Activated CD4-positive, alpha-beta T cell treated with anti-CD3 and anti-CD28 coated beads for 36 hours (primary cell): ENCODE measurements at regions of chr5 and their contacts with region 1.

Region 1: DNA sequence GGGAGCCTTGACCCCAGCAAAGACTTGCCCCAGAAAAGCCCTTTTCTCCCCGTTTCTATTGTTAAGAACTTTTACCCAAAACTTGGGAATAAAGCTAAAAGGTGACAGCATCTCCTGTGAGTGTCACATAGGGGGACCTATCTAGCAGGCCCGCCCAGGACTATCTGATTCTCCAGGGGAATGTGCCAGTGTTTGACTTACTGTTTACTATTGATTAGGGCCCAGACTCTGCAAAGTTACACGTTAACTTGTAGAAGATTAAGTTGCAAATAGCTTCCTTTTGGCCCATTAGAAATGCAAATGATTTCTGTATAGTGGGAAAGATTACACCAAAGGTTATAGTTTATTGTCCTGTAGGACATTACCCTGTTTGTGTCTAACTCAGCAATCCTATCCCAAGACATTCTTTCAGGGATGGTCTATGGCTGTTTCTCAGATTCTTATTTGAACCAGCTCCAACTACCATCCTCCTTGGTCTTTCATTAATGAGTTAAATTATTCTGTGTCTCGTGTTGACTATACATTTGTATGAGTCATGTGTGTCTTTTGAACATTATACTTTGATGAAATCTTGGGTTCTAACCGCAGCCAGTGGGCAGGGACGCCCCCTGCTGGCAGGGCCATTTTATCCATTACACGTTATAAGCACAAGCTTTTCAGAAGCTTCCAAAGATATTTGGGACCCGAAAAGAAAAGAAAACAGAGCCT is 60.7 kb downstream of the HRH2 start:
- DNase-seq: peak; percentile 88
- ATAC-seq: peak; percentile 91
- H3K4me3 Mint-ChIP-seq: no peak overlapping the region
- H3K27ac Mint-ChIP-seq: no peak overlapping the region
- H3K4me1 Mint-ChIP-seq: peaks cover 6% of the 10 kb centered on the region
- H3K27me3 Mint-ChIP-seq: no peaks in the 10 kb centered on the region

Region 2: DNA sequence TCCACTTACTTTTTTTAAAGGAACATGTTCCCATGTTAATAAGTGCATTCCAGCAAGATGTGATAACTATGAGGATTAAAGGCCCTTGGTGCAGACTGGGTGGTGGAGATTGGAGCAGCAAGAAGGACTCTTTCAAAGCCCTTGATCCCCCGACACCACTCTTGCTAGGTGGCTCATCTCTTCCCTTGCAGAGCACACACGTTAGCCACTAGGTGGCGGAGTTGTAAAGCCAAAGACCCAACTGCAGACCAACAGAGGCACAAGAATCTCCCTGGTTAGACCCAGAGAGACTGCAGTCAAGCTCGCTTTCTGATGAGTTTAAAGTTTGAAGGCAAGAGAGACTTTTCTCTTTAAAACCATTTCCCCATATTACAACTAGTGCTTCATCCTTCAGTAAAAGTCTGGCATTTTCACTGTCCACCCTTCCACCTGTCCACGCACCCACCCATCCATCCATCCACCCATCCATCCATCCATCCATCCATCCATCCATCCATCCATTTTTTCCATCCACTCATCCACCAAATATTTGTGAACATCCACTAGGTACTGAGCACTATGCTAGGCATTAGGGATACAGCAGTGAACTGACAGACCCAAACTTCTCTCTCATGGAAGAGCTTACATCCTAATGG is 767.3 kb before region 1 on chr5:
- CTCF ChIA-PET with region 1: no interaction called
- POLR2A ChIA-PET with region 1: no interaction called
- intact Hi-C with region 1: loop called in 1 of 2 experiments (anchors 2 kb)
- DNase-seq: peak; percentile 74
- ATAC-seq: peak; percentile 74
- H3K4me3 Mint-ChIP-seq: no peak overlapping the region
- H3K27ac Mint-ChIP-seq: no peak overlapping the region
- H3K4me1 Mint-ChIP-seq: no peaks in the 10 kb centered on the region
- H3K27me3 Mint-ChIP-seq: peaks cover 10% of the 10 kb centered on the region

Region 3: DNA sequence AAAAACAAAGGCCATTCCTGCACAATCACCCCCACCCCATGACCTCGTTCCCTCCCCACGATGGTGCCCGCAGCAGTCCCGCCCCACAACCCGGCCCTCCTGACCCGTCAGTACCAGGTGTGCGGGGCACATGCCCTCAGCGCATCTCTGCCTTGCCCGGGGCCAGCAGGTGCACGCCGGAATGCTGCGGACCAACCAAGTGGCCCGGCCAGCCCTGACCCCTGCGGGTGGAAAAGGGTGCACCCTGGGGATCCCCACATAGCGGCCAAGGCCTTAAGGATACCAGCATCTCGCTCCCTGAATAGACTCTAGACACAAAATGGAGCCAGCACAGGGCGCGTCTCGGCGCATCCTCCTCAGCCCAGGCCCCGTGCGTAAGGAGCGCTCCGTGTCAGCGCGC is 234.2 kb before region 1 on chr5:
- CTCF ChIA-PET with region 1: no interaction called
- POLR2A ChIA-PET with region 1: no interaction called
- intact Hi-C with region 1: no loop called
- DNase-seq: no peak
- ATAC-seq: no peak
- H3K4me3 Mint-ChIP-seq: no peak overlapping the region
- H3K27ac Mint-ChIP-seq: no peak overlapping the region
- H3K4me1 Mint-ChIP-seq: peaks cover 89% of the 10 kb centered on the region
- H3K27me3 Mint-ChIP-seq: no peaks in the 10 kb centered on the region

Region 4: GRCh38 chr5:175526691-175527090 is 191.9 kb before region 1 on chr5:
- CTCF ChIA-PET with region 1: interaction called, 22 read pairs
- POLR2A ChIA-PET with region 1: no interaction called
- intact Hi-C with region 1: no loop called
- DNase-seq: no peak
- ATAC-seq: no peak
- H3K4me3 Mint-ChIP-seq: no peak overlapping the region
- H3K27ac Mint-ChIP-seq: peak overlapping the region; percentile 79
- H3K4me1 Mint-ChIP-seq: peaks cover 66% of the 10 kb centered on the region
- H3K27me3 Mint-ChIP-seq: no peaks in the 10 kb centered on the region

Region 5: DNA sequence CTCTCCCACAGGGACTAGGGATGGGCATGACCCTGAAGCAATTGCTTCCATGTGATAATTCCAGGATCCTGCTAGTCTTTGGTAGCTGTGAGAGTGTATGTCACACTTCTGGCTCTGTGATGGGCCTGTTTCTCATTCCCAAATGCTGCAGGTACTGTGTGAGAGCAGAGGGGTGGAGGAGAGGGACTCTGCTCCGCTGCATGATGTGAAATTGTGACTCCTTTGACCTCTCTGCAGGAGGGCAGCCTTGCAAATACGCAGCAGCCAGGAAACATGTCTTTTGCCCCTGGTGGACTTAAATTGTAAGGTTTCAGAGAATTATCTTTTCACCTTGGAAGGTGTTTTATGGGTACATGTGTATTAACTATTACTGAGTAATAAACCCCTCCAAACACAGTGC is 178.6 kb before region 1 on chr5:
- CTCF ChIA-PET with region 1: interaction called, 70 read pairs
- POLR2A ChIA-PET with region 1: no interaction called
- intact Hi-C with region 1: loop called (anchors 2 kb)
- DNase-seq: no peak
- ATAC-seq: no peak
- H3K4me3 Mint-ChIP-seq: no peak overlapping the region
- H3K27ac Mint-ChIP-seq: no peak overlapping the region
- H3K4me1 Mint-ChIP-seq: peaks cover 24% of the 10 kb centered on the region
- H3K27me3 Mint-ChIP-seq: no peaks in the 10 kb centered on the region

Region 6: DNA sequence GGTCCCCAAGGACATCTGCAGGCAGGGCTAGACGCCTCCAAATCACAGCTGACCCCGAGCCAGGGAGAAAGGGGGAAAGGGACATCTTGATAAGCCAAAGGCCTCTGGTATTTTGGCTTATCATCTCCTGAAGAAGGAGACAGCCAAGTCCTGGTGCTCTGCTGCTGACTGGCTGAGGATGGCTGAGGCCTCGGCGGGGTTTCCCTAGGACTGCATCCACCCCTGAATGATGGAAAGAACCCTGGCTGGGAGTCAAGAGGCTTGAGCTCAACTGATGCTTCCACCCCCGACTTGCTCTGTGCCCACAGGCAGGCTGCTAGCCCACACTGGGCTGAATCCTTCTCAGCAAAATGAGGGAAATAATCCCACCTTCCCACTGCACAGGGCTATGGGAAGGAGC is 91.5 kb before region 1 on chr5:
- CTCF ChIA-PET with region 1: no interaction called
- POLR2A ChIA-PET with region 1: no interaction called
- intact Hi-C with region 1: no loop called
- DNase-seq: no peak
- ATAC-seq: no peak
- H3K4me3 Mint-ChIP-seq: no peak overlapping the region
- H3K27ac Mint-ChIP-seq: no peak overlapping the region
- H3K4me1 Mint-ChIP-seq: no peaks in the 10 kb centered on the region
- H3K27me3 Mint-ChIP-seq: no peaks in the 10 kb centered on the region

Region 7: GRCh38 chr5:175696139-175696854 is 22.3 kb before region 1 on chr5:
- CTCF ChIA-PET with region 1: interaction called, 16 read pairs
- POLR2A ChIA-PET with region 1: no interaction called
- intact Hi-C with region 1: loop called in 1 of 2 experiments (anchors 2 kb)
- DNase-seq: peak; percentile 94
- ATAC-seq: peak; percentile 90
- H3K4me3 Mint-ChIP-seq: peak overlapping the region; percentile 43
- H3K27ac Mint-ChIP-seq: peak overlapping the region; percentile 91
- H3K4me1 Mint-ChIP-seq: peaks cover 24% of the 10 kb centered on the region
- H3K27me3 Mint-ChIP-seq: no peaks in the 10 kb centered on the region

Region 8: GRCh38 chr5:175729829-175730277 is 11.3 kb after region 1 on chr5:
- CTCF ChIA-PET with region 1: interaction called, 18 read pairs
- POLR2A ChIA-PET with region 1: no interaction called
- intact Hi-C with region 1: no loop called
- DNase-seq: peak; percentile 95
- ATAC-seq: peak; percentile 97
- H3K4me3 Mint-ChIP-seq: no peak overlapping the region
- H3K27ac Mint-ChIP-seq: no peak overlapping the region
- H3K4me1 Mint-ChIP-seq: peaks cover 5% of the 10 kb centered on the region
- H3K27me3 Mint-ChIP-seq: peaks cover 15% of the 10 kb centered on the region

Region 9: GRCh38 chr5:175740014-175740413 is 21.5 kb after region 1 on chr5:
- CTCF ChIA-PET with region 1: no interaction called
- POLR2A ChIA-PET with region 1: no interaction called
- intact Hi-C with region 1: no loop called
- DNase-seq: no peak
- ATAC-seq: no peak
- H3K4me3 Mint-ChIP-seq: no peak overlapping the region
- H3K27ac Mint-ChIP-seq: no peak overlapping the region
- H3K4me1 Mint-ChIP-seq: no peaks in the 10 kb centered on the region
- H3K27me3 Mint-ChIP-seq: peaks cover 35% of the 10 kb centered on the region

Region 10: DNA sequence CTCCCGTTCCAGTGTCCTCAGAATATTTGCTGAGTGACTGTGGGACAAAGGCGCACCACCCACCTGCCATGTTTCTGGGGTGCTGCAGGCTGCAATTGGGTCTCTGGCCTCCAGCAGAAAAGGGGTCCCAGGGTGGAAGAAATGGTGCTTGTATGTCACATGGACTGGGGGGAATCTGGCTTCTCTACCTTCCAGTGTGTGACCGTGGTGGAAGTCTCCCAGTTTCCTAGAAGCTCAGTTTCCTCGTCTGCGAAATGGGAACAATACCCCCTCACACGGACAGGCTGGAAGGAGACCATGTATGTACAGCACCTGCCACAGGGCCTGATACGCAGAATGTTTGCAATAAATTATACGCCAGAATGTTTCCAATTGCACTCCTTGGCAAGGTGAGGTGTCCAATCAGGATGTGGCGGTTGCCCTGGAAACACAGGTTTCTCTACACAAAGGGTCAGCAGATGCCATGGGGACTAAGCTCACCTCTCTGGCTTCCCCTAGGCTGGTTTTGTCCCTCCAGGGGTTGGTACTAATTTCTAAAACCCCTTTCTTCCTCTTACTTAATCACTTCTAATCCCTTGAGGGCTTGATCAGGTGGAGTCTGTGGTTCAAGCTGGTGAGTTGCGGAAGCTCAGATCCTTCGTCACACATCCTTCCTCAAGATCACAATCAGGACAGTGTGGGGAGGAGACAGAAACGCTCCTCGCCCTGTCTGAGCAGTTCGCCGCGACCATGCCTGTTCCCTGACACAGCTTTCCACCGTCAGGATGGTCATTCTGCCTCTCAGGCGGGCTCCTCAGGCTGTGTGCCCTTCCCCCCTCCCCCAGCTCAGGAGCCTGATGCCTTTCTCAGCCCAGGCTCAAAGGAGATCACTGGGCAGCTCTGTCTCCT is 176.9 kb after region 1 on chr5:
- CTCF ChIA-PET with region 1: no interaction called
- POLR2A ChIA-PET with region 1: no interaction called
- intact Hi-C with region 1: no loop called
- DNase-seq: peak; percentile 57
- ATAC-seq: peak; percentile 99
- H3K4me3 Mint-ChIP-seq: no peak overlapping the region
- H3K27ac Mint-ChIP-seq: no peak overlapping the region
- H3K4me1 Mint-ChIP-seq: peaks cover 20% of the 10 kb centered on the region
- H3K27me3 Mint-ChIP-seq: no peaks in the 10 kb centered on the region